ENCODE measurements at regions of chr17 and their contacts with region 1.

Region 1: DNA sequence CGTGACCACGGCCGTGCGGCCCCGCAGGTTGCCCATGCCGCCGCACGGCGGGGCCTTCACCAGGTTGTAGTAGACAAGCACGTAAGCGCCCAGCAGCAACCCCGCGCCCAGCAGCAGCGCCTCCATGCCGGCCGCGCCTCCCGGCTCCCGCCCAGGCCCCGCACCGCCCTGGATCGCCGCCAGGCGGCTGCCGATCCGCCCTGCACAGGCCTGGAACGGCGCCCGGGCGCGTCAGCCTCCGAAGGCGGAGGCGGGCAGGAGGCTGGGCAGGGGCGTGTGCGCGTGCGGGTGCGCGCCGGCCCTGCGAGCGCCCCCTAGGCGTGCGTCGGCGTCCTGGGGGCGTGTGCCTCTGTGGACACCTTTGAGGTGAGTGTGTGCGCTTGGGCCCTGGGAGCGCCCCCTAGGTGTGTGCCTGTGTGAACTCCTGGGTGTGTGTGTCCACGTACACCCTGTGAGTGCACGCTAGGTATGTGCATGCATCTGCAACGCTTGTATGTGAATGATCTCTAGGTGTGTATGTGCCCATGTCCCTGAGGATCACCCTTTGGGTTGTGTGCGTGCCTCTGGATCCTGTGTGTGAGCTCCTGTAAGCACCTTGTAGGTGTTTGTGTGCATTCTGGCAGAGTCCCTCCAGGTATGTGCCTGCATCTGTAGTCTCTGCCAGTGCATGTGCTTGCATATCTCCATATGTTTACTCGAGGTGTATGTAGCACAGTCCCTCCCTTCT is at the start of gene DHRS13:
- DNase-seq: peak; percentile 96 to 97 (median 96)
- H3K4me3 ChIP-seq: peak within 1 kb of the TSS; percentile 62 to 79 (median 75)
- H3K27ac ChIP-seq: peak within 1 kb of the TSS; percentile 21 to 77
- H3K4me1 ChIP-seq: peaks cover 0 to 32% (median 23%) of the 10 kb centered on the region in 4 experiments
- H3K27me3 ChIP-seq: no peaks in the 10 kb centered on the region

Region 2: GRCh38 chr17:28743225-28744103 is 159.5 kb before region 1 on chr17 and contains the start of gene TRAF4:
- CTCF ChIA-PET with region 1: no interaction called
- POLR2A ChIA-PET with region 1: no interaction called
- DNase-seq: peak; percentile 71 to 87 (median 83)
- H3K4me3 ChIP-seq: peak within 1 kb of the TSS; percentile 27 to 82 (median 63)
- H3K27ac ChIP-seq: peak within 1 kb of the TSS; percentile 1 to 74
- H3K4me1 ChIP-seq: peaks cover 6 to 83% (median 79%) of the 10 kb centered on the region in 4 experiments
- H3K27me3 ChIP-seq: peaks cover 0 to 4% (median 0%) of the 10 kb centered on the region in 5 experiments

Region 3: DNA sequence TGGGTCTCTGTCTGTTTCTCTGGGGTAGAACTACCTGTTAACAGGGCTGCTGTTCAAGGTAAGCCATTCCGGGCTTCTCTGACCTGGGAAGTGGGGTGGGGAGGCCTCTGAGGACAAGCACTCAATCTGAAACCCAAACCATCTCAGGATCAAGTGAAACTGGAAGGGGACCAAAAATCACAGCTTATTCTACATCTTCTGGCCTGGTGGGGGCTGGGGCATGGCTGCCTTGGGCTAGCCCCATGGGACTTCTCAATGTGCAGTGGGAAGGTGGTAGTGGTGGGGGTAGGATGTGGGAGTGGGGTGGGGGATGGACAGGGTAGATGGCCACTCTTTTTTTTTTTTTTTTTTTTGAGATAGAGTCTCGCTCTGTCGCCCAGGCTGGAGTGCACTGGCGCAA is 11.0 kb before region 1 on chr17:
- CTCF ChIA-PET with region 1: interaction called, 14 read pairs
- POLR2A ChIA-PET with region 1: no interaction called
- DNase-seq: no peak
- H3K4me3 ChIP-seq: no peak overlapping the region
- H3K27ac ChIP-seq: peak overlapping the region in 1 of 2 experiments; percentile 78
- H3K4me1 ChIP-seq: peaks cover 22 to 51% (median 38%) of the 10 kb centered on the region in 4 experiments
- H3K27me3 ChIP-seq: no peaks in the 10 kb centered on the region

Region 4: GRCh38 chr17:28916302-28916934 is 13.4 kb after region 1 on chr17:
- CTCF ChIA-PET with region 1: interaction called, 216 read pairs
- POLR2A ChIA-PET with region 1: no interaction called
- DNase-seq: peak; percentile 45 to 63 (median 59)
- H3K4me3 ChIP-seq: no peak overlapping the region
- H3K27ac ChIP-seq: no peak overlapping the region
- H3K4me1 ChIP-seq: no peaks in the 10 kb centered on the region
- H3K27me3 ChIP-seq: no peaks in the 10 kb centered on the region

Measured in common myeloid progenitor, CD34-positive (primary cell).